WTC11 (cell line): ENCODE measurements at regions of chr11 and their contacts with region 1.

Region 1: GRCh38 chr11:128948589-128948988 is 5.9 kb upstream of the TP53AIP1 start:
- DNase-seq: peak; percentile 52
- ATAC-seq: peak; percentile 87
- H3K4me3 Mint-ChIP-seq: no peak overlapping the region
- H3K27ac Mint-ChIP-seq: no peak overlapping the region
- H3K4me1 Mint-ChIP-seq: no peaks in the 10 kb centered on the region
- H3K27me3 Mint-ChIP-seq: peaks cover 13% of the 10 kb centered on the region
- CTCF ChIP-seq: no peak

Region 2: GRCh38 chr11:128841461-128842072 is 107.0 kb before region 1 on chr11:
- CTCF ChIA-PET with region 1: no interaction called
- POLR2A ChIA-PET with region 1: no interaction called
- DNase-seq: no peak
- ATAC-seq: no peak
- H3K4me3 Mint-ChIP-seq: no peak overlapping the region
- H3K27ac Mint-ChIP-seq: no peak overlapping the region
- H3K4me1 Mint-ChIP-seq: peaks cover 31% of the 10 kb centered on the region
- H3K27me3 Mint-ChIP-seq: no peaks in the 10 kb centered on the region; the same call in 1 of the 2 replicates
- CTCF ChIP-seq: no peak

Region 3: DNA sequence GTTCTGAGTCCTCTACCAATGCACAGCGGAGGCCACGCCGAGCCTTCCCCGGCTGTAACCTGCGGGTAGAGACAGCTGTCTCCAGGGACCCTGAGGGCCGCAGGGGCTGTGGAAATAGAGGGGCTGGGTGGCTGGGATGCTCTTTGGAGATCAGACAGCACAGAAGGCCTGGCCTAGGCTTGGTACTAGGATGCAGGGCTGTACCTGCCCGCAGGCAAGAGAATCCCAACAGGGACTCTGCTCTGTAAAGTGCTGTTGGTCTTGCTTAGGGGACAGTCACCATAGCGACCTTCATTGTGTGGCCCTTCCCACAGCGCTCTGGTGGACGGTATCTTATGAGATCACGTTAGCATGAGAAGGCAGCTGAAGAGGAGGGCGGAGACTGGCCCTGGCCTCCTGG is 68.8 kb before region 1 on chr11:
- CTCF ChIA-PET with region 1: interaction called, 180 read pairs
- POLR2A ChIA-PET with region 1: no interaction called
- DNase-seq: no peak
- ATAC-seq: peak; percentile 72
- H3K4me3 Mint-ChIP-seq: no peak overlapping the region
- H3K27ac Mint-ChIP-seq: no peak overlapping the region
- H3K4me1 Mint-ChIP-seq: peaks cover 7% of the 10 kb centered on the region
- H3K27me3 Mint-ChIP-seq: peaks cover 59% of the 10 kb centered on the region
- CTCF ChIP-seq: no peak

Region 4: GRCh38 chr11:128884703-128885338 is 63.8 kb before region 1 on chr11:
- CTCF ChIA-PET with region 1: interaction called, 180 read pairs
- POLR2A ChIA-PET with region 1: no interaction called
- DNase-seq: peak; percentile 67
- ATAC-seq: peak; percentile 62
- H3K4me3 Mint-ChIP-seq: no peak overlapping the region
- H3K27ac Mint-ChIP-seq: no peak overlapping the region
- H3K4me1 Mint-ChIP-seq: peaks cover 32% of the 10 kb centered on the region
- H3K27me3 Mint-ChIP-seq: peaks cover 75% of the 10 kb centered on the region
- CTCF ChIP-seq: peak; percentile 78

Region 5: GRCh38 chr11:128890543-128891368 is 57.8 kb before region 1 on chr11 and contains the start of gene KCNJ5:
- CTCF ChIA-PET with region 1: interaction called, 180 read pairs
- POLR2A ChIA-PET with region 1: no interaction called
- DNase-seq: peak; percentile 56
- ATAC-seq: peak; percentile 41
- H3K4me3 Mint-ChIP-seq: peak within 1 kb of the TSS; percentile 77
- H3K27ac Mint-ChIP-seq: no peak within 1 kb of the TSS
- H3K4me1 Mint-ChIP-seq: peaks cover 42% of the 10 kb centered on the region
- H3K27me3 Mint-ChIP-seq: peaks cover 95% of the 10 kb centered on the region
- CTCF ChIP-seq: no peak
- total RNA-seq, gene KCNJ5: 0.09 to 0.23 TPM (median 0.22 TPM) in 3 replicates

Region 6: GRCh38 chr11:128905345-128906184 is 43.0 kb before region 1 on chr11:
- CTCF ChIA-PET with region 1: interaction called, 35 read pairs
- POLR2A ChIA-PET with region 1: no interaction called
- DNase-seq: peak; percentile 69
- ATAC-seq: peak; percentile 56
- H3K4me3 Mint-ChIP-seq: peak overlapping the region; percentile 70
- H3K27ac Mint-ChIP-seq: no peak overlapping the region
- H3K4me1 Mint-ChIP-seq: peaks cover 40% of the 10 kb centered on the region
- H3K27me3 Mint-ChIP-seq: peaks cover 86% of the 10 kb centered on the region
- CTCF ChIP-seq: peak; percentile 37; the same call in 1 of the 2 replicates

Region 7: GRCh38 chr11:128928400-128928799 is 20.2 kb before region 1 on chr11:
- CTCF ChIA-PET with region 1: interaction called, 10 read pairs
- POLR2A ChIA-PET with region 1: no interaction called
- DNase-seq: no peak
- ATAC-seq: no peak
- H3K4me3 Mint-ChIP-seq: no peak overlapping the region
- H3K27ac Mint-ChIP-seq: no peak overlapping the region
- H3K4me1 Mint-ChIP-seq: peaks cover 57% of the 10 kb centered on the region
- H3K27me3 Mint-ChIP-seq: peaks cover 94% of the 10 kb centered on the region
- CTCF ChIP-seq: no peak

Region 8: GRCh38 chr11:128936606-128937251 is 11.9 kb before region 1 on chr11:
- CTCF ChIA-PET with region 1: interaction called, 25 read pairs
- POLR2A ChIA-PET with region 1: no interaction called
- DNase-seq: peak; percentile 70
- ATAC-seq: peak; percentile 71
- H3K4me3 Mint-ChIP-seq: no peak overlapping the region
- H3K27ac Mint-ChIP-seq: 0 out of 2 replicates have a peak overlapping the region, but pooled peaks have one; percentile 41
- H3K4me1 Mint-ChIP-seq: peaks cover 22% of the 10 kb centered on the region
- H3K27me3 Mint-ChIP-seq: peaks cover 76% of the 10 kb centered on the region
- CTCF ChIP-seq: no peak